PC-9 (cell line): ENCODE measurements at regions of chr9 and their contacts with region 1.

Region 1: GRCh38 chr9:112945620-112946208 is 55.0 kb upstream of the SLC46A2 start:
- DNase-seq: peak in 1 of 2 experiments; percentile 19
- H3K4me3 ChIP-seq: no peak overlapping the region
- H3K27ac ChIP-seq: no peak overlapping the region
- H3K4me1 ChIP-seq: no peaks in the 10 kb centered on the region
- H3K27me3 ChIP-seq: peaks cover 20% of the 10 kb centered on the region
- CTCF ChIP-seq: peak; percentile 56

Region 2: GRCh38 chr9:112898872-112899311 is 46.8 kb before region 1 on chr9:
- CTCF ChIA-PET with region 1: no interaction called
- POLR2A ChIA-PET with region 1: no interaction called
- intact Hi-C with region 1: no loop called
- DNase-seq: peak in 1 of 2 experiments; percentile 49
- H3K4me3 ChIP-seq: no peak overlapping the region
- H3K27ac ChIP-seq: no peak overlapping the region
- H3K4me1 ChIP-seq: peaks cover 7% of the 10 kb centered on the region; the same call in 1 of the 2 replicates
- H3K27me3 ChIP-seq: no peaks in the 10 kb centered on the region
- CTCF ChIP-seq: no peak

Region 3: GRCh38 chr9:113026200-113026599 is 80.5 kb after region 1 on chr9:
- CTCF ChIA-PET with region 1: no interaction called
- POLR2A ChIA-PET with region 1: no interaction called
- intact Hi-C with region 1: loop called (anchors 10 kb)
- DNase-seq: no peak
- H3K4me3 ChIP-seq: no peak overlapping the region
- H3K27ac ChIP-seq: no peak overlapping the region
- H3K4me1 ChIP-seq: no peaks in the 10 kb centered on the region
- H3K27me3 ChIP-seq: no peaks in the 10 kb centered on the region
- CTCF ChIP-seq: no peak